CD4-positive, alpha-beta memory T cell (primary cell): ENCODE measurements at regions of chr6 and their contacts with region 1.

Region 1: GRCh38 chr6:144659202-144660182 is 374.4 kb downstream of the UTRN start:
- DNase-seq: peak in 4 of 5 donors; percentile 13 to 27 (median 24)
- H3K4me3 ChIP-seq: no peak overlapping the region
- H3K4me3 Mint-ChIP-seq: peak overlapping the region; percentile 57 to 83 (median 68)
- H3K27ac ChIP-seq: peak overlapping the region; percentile 18
- H3K27ac Mint-ChIP-seq: peak overlapping the region; percentile 85 to 96 (median 93)
- H3K4me1 ChIP-seq: peaks cover 69% of the 10 kb centered on the region
- H3K4me1 Mint-ChIP-seq: peaks cover 57 to 84% (median 71%) of the 10 kb centered on the region in 4 donors
- H3K27me3 ChIP-seq: no peaks in the 10 kb centered on the region
- H3K27me3 Mint-ChIP-seq: no peaks in the 10 kb centered on the region

Region 2: DNA sequence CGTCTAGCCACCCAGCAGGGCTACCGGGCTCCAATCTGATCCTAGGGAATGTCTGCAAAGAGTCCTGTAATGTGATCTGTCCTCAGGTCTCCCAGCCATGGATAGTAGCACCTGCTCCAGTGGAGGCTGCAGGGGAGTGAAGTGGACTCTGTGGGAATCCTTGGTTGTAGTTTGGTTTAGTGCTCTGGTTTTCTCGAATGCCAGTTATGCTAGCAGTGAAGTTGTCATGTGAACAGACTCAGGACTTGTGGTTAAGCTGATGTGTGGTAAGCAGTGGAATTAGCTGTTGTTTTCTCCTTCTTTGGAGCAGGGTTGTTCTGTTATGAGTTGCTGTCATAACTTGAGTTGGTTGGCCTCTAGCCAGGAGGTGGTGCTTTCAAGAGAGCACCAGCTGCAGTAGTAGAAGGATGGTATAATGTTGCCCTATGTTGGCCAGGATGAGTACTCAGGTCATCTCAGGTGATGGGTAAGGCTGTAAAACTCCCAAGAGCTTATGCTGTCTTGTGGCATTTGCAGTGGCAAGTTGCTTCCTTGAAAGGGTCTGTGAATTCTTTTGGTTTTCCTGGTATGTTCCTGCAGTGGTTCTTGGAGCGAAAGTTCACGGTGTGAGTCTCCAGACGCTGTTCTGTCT is 15.9 kb after region 1 on chr6:
- CTCF ChIA-PET with region 1: no interaction called
- POLR2A ChIA-PET with region 1: interaction called, 10 read pairs
- intact Hi-C with region 1: no loop called
- DNase-seq: peak; percentile 12 to 52 (median 37)
- H3K4me3 ChIP-seq: no peak overlapping the region
- H3K4me3 Mint-ChIP-seq: peak overlapping the region; percentile 11 to 55 (median 20)
- H3K27ac ChIP-seq: no peak overlapping the region
- H3K27ac Mint-ChIP-seq: peak overlapping the region; percentile 15 to 80 (median 66)
- H3K4me1 ChIP-seq: peaks cover 12% of the 10 kb centered on the region
- H3K4me1 Mint-ChIP-seq: peaks cover 24 to 58% (median 45%) of the 10 kb centered on the region in 4 donors
- H3K27me3 ChIP-seq: no peaks in the 10 kb centered on the region
- H3K27me3 Mint-ChIP-seq: no peaks in the 10 kb centered on the region

Region 3: GRCh38 chr6:144689503-144690075 is 30.1 kb after region 1 on chr6:
- CTCF ChIA-PET with region 1: no interaction called
- POLR2A ChIA-PET with region 1: no interaction called
- intact Hi-C with region 1: no loop called
- DNase-seq: no peak
- H3K4me3 ChIP-seq: no peak overlapping the region
- H3K4me3 Mint-ChIP-seq: no peak overlapping the region
- H3K27ac ChIP-seq: no peak overlapping the region
- H3K27ac Mint-ChIP-seq: no peak overlapping the region
- H3K4me1 ChIP-seq: no peaks in the 10 kb centered on the region
- H3K4me1 Mint-ChIP-seq: peaks cover 25 to 34% (median 29%) of the 10 kb centered on the region in 4 donors
- H3K27me3 ChIP-seq: no peaks in the 10 kb centered on the region
- H3K27me3 Mint-ChIP-seq: no peaks in the 10 kb centered on the region